ENCODE measurements at regions of chr17 and their contacts with region 1.

Region 1: DNA sequence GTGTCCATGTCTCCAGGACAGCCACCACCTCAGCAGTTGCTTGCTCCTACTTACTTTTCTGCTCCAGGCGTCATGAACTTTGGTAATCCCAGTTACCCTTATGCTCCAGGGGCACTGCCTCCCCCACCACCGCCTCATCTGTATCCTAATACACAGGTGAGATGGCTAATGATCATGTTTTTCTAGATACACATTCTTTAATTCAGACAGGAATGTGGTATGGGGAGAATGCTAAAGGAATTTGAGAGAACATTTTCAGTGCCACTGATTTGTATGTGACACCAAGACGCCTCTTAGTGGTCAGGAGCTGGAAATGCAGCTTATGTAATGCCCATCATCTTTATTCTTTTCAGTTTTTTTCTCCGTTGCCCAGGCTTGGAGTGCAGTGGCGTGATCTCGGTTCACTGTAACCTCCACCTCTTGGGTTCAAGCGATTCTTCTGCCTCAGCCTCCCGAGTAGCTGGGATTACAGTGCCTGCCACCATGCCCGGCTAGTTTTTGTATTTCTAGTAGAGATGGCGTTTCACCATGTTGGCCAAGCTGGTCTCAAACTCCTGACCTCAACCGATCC is 8.9 kb upstream of the RAPGEFL1 start:
- DNase-seq: peak in 4 of 5 donors; percentile 62 to 68 (median 64)
- H3K4me3 ChIP-seq: no peak overlapping the region
- H3K4me3 Mint-ChIP-seq: no peak overlapping the region
- H3K27ac ChIP-seq: no peak overlapping the region
- H3K27ac Mint-ChIP-seq: peak overlapping the region; percentile 57 to 94 (median 89)
- H3K4me1 ChIP-seq: no peaks in the 10 kb centered on the region
- H3K4me1 Mint-ChIP-seq: peaks cover 4 to 15% (median 6%) of the 10 kb centered on the region in 4 donors
- H3K27me3 ChIP-seq: no peaks in the 10 kb centered on the region
- H3K27me3 Mint-ChIP-seq: no peaks in the 10 kb centered on the region

Region 2: DNA sequence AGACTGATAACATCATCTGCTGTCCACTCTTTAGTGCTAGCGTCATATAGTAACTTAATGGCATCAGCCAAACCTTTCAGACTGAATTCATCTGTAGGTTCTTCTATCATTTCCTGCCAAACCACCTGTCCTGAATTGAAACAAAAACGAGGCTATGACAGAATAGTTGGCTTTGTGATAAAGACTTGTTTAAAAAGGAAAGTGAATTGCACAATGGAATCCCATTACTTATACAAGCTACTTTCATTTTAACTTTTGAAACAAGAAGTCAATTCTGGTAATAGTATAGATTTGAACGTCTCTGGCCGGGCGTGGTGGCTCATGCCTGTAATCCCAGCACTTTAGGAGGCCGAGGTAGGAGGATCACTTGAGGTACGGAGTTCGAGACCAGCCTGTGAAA is 1224.7 kb before region 1 on chr17:
- CTCF ChIA-PET with region 1: no interaction called
- POLR2A ChIA-PET with region 1: no interaction called
- intact Hi-C with region 1: no loop called
- DNase-seq: no peak
- H3K4me3 ChIP-seq: no peak overlapping the region
- H3K4me3 Mint-ChIP-seq: no peak overlapping the region
- H3K27ac ChIP-seq: no peak overlapping the region
- H3K27ac Mint-ChIP-seq: no peak overlapping the region
- H3K4me1 ChIP-seq: no peaks in the 10 kb centered on the region
- H3K4me1 Mint-ChIP-seq: no peaks in the 10 kb centered on the region
- H3K27me3 ChIP-seq: no peaks in the 10 kb centered on the region
- H3K27me3 Mint-ChIP-seq: no peaks in the 10 kb centered on the region

Region 3: GRCh38 chr17:39676198-39676819 is 492.0 kb before region 1 on chr17:
- CTCF ChIA-PET with region 1: no interaction called
- POLR2A ChIA-PET with region 1: no interaction called
- intact Hi-C with region 1: no loop called
- DNase-seq: peak; percentile 54 to 72 (median 69)
- H3K4me3 ChIP-seq: no peak overlapping the region
- H3K4me3 Mint-ChIP-seq: peak overlapping the region in 7 of 8 donors; percentile 21 to 77 (median 70)
- H3K27ac ChIP-seq: peak overlapping the region; percentile 6
- H3K27ac Mint-ChIP-seq: peak overlapping the region; percentile 77 to 97 (median 92)
- H3K4me1 ChIP-seq: peaks cover 61% of the 10 kb centered on the region
- H3K4me1 Mint-ChIP-seq: peaks cover 44 to 70% (median 58%) of the 10 kb centered on the region in 4 donors
- H3K27me3 ChIP-seq: no peaks in the 10 kb centered on the region
- H3K27me3 Mint-ChIP-seq: no peaks in the 10 kb centered on the region

Region 4: GRCh38 chr17:40026816-40027613 is 141.3 kb before region 1 on chr17:
- CTCF ChIA-PET with region 1: interaction called, 27 read pairs
- POLR2A ChIA-PET with region 1: no interaction called
- intact Hi-C with region 1: no loop called
- DNase-seq: peak; percentile 67 to 78 (median 69)
- H3K4me3 ChIP-seq: no peak overlapping the region
- H3K4me3 Mint-ChIP-seq: peak overlapping the region in 3 of 8 donors; percentile 46 to 75 (median 56)
- H3K27ac ChIP-seq: no peak overlapping the region
- H3K27ac Mint-ChIP-seq: peak overlapping the region in 4 of 7 donors; percentile 15 to 52 (median 32)
- H3K4me1 ChIP-seq: peaks cover 25% of the 10 kb centered on the region
- H3K4me1 Mint-ChIP-seq: peaks cover 19 to 24% (median 21%) of the 10 kb centered on the region in 4 donors
- H3K27me3 ChIP-seq: no peaks in the 10 kb centered on the region
- H3K27me3 Mint-ChIP-seq: no peaks in the 10 kb centered on the region

Region 5: DNA sequence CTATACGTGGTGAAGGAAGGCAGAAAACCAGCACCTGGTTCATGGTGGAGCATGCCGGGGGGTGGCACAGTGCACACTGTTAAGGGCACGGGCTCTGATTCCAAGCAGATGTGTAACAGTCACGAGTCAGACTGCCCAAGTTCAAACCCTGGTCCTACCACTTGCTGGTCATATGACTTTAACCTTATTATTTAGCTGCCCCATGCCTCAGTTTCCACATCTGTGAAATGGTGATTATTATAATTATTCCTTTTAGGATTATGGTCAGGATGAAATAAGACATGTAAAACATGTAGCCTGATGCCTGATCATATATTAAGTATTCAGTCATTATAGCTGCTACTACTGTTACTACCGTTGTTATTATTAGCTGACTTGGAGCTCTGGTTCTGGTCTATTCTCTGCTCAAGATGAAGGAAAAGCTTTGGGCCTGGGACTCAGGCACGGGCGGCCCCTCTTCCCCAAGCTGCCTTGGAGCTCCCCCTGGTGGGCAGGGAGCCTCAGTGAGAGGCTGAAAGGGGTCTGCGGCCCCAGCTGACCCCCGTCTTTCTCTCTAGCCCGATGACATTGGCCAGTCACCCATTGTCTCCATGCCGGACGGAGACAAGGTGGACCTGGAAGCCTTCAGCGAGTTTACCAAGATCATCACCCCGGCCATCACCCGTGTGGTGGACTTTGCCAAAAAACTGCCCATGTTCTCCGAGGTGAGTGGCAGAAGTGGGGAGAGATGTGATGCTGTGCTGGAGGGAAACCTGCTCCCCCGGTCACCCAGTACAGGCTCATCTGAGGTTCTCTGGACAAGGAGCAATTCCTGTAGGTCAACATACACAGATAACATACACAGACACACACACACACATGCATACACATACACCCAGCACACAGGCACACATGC is 82.0 kb before region 1 on chr17:
- CTCF ChIA-PET with region 1: interaction called, 11 read pairs
- POLR2A ChIA-PET with region 1: no interaction called
- intact Hi-C with region 1: no loop called
- DNase-seq: peak in 3 of 5 donors; percentile 40 to 52 (median 50)
- H3K4me3 ChIP-seq: no peak overlapping the region
- H3K4me3 Mint-ChIP-seq: no peak overlapping the region
- H3K27ac ChIP-seq: no peak overlapping the region
- H3K27ac Mint-ChIP-seq: peak overlapping the region in 4 of 7 donors; percentile 1 to 77 (median 60)
- H3K4me1 ChIP-seq: peaks cover 5% of the 10 kb centered on the region
- H3K4me1 Mint-ChIP-seq: peaks cover 6 to 23% (median 10%) of the 10 kb centered on the region in 4 donors
- H3K27me3 ChIP-seq: no peaks in the 10 kb centered on the region
- H3K27me3 Mint-ChIP-seq: no peaks in the 10 kb centered on the region

Region 6: DNA sequence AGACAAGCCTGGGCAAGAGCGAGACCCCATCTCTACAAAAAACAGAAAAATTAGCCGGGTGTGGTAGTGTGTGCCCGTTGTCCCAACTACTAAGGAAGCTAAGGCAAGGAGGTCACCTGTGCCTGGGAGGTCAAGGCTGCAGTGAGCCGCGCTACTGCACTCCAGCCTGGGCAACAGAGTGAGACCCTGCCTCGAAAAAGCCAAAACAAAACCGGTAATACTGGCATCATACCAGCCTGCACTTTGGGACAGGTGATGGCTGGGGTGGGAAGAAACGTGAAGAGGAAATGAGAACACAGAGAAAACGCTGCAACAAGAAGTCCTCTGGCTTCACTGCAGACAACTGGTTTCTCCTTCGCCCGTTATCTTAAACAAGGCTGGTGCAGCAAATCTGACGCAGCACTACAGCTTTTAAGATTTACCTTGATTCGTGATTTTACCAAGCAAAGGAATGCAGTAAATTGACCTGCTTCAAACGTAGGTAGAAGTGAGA is 28.7 kb before region 1 on chr17:
- CTCF ChIA-PET with region 1: interaction called, 5 read pairs
- POLR2A ChIA-PET with region 1: interaction called, 14 read pairs
- intact Hi-C with region 1: no loop called
- DNase-seq: no peak
- H3K4me3 ChIP-seq: peak overlapping the region; percentile 25 to 62
- H3K4me3 Mint-ChIP-seq: peak overlapping the region; percentile 91 to 98 (median 96)
- H3K27ac ChIP-seq: peak overlapping the region; percentile 97
- H3K27ac Mint-ChIP-seq: peak overlapping the region; percentile 98 to 100 (median 99)
- H3K4me1 ChIP-seq: peaks cover 28% of the 10 kb centered on the region
- H3K4me1 Mint-ChIP-seq: peaks cover 23 to 49% (median 31%) of the 10 kb centered on the region in 4 donors
- H3K27me3 ChIP-seq: no peaks in the 10 kb centered on the region
- H3K27me3 Mint-ChIP-seq: no peaks in the 10 kb centered on the region

Region 7: DNA sequence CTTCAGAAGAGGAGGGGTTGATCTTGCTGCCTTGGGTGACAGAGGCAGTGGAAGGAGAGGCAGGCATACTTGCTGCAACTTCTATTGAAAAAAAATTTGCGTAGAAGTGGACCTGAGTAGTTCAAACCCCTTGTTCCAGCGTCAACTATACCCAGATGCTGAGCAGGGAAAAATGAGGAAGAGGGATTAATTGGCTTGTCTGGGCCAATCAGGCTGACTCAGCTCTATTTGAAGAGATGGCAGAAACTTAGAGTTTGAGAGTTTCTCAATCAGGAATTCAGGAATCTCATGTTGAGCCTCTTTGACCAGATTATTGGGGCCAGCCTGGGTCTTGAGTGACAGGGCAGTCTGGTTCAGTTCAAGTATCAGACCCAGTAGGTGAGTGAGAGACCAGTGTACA is 10.4 kb before region 1 on chr17:
- CTCF ChIA-PET with region 1: interaction called, 63 read pairs
- POLR2A ChIA-PET with region 1: no interaction called
- intact Hi-C with region 1: no loop called
- DNase-seq: no peak
- H3K4me3 ChIP-seq: no peak overlapping the region
- H3K4me3 Mint-ChIP-seq: no peak overlapping the region
- H3K27ac ChIP-seq: no peak overlapping the region
- H3K27ac Mint-ChIP-seq: peak overlapping the region; percentile 4 to 85 (median 71)
- H3K4me1 ChIP-seq: peaks cover 5% of the 10 kb centered on the region
- H3K4me1 Mint-ChIP-seq: peaks cover 11 to 39% (median 28%) of the 10 kb centered on the region in 4 donors
- H3K27me3 ChIP-seq: no peaks in the 10 kb centered on the region
- H3K27me3 Mint-ChIP-seq: no peaks in the 10 kb centered on the region